Right cardiac atrium (tissue), 5 donors: ENCODE measurements at regions of chr16 and their contacts with region 1.

Region 1: DNA sequence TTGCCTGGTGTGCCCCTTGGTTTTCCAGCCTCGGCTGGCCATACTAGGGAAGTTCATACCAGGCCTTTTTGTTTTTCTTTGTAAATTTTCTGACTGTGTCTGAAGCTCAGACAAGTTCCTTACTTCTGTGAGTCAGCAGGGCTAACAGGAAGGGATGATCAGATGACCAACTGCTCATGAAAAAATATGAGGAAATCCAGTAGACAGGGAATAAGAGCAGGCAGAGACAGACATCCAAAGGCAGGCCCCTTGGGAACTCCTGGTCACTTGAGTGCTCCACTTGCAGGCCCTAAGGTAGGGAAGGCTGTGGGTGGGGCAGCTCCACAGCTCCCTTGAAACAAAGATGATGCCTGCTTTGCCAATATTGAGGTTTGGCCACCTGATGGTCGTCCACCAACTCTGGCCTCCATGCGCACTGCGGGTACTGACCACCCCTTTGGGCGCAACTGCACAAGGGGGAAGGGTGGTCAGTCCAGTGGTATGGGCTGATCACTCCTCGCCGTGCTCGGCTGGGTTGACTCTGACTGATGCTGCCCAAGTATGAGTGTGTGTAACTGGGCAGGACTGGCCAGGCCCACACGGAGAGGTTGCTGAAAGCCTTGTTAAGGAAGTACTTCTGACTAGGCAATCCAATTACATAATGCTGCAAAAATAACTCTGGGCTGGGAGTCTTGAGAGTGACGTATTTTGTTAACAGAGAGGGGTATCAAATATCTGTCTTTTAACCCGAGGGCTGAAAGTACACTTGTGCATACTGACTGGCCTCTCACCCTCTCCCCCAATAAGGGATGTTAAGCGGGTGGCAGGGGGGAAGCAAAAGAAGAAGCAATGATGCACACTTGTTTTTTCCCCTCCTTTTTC is 20.8 kb upstream of the ZFHX3 start:
- DNase-seq: peak; percentile 78 to 89 (median 84)
- ATAC-seq: peak; percentile 74 to 75
- H3K4me3 ChIP-seq: no peak overlapping the region
- H3K27ac ChIP-seq: peak overlapping the region; percentile 22
- H3K4me1 ChIP-seq: peaks cover 5% of the 10 kb centered on the region
- H3K27me3 ChIP-seq: no peaks in the 10 kb centered on the region

Region 2: DNA sequence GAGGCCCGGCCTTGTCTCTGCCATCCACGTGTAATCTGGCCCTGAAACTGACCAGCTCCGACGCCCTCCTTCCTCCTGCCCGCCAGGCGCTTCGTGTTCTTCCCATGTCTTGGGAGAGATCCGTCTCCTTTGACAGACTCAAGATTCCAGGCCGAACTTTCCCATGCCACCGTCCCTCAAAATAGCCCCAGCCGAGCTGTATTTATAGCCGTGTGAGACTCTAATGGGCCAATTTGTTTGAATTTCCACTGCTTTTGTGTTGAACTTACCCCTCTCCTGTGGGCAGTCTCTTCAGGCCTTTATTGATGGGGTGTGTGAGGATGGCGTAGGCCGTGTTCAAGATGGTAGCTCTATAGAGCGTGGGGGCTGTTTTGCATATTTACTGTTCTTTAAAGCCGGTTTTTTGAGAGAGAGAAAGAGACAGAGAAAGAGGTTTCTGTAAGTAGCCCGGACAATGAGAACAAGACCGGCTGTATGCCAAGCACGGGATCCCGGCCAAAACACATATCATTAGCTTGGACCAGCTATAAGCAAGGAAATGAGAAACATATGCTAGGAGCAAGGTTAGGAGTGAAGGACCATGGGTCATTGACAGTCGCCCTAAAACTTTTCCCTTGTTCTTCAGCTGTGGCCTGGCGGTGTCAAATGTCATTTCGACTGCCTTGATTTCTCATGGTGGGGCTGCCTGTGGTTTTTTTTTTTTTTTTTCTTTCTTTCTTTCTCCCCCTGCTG is 103.6 kb after region 1 on chr16:
- intact Hi-C with region 1: loop called in 1 of 4 experiments (anchors 10 kb)
- DNase-seq: peak; percentile 78 to 92 (median 88)
- ATAC-seq: peak; percentile 72 to 78
- H3K4me3 ChIP-seq: no peak overlapping the region
- H3K27ac ChIP-seq: peak overlapping the region; percentile 33
- H3K4me1 ChIP-seq: no peaks in the 10 kb centered on the region
- H3K27me3 ChIP-seq: no peaks in the 10 kb centered on the region

Region 3: DNA sequence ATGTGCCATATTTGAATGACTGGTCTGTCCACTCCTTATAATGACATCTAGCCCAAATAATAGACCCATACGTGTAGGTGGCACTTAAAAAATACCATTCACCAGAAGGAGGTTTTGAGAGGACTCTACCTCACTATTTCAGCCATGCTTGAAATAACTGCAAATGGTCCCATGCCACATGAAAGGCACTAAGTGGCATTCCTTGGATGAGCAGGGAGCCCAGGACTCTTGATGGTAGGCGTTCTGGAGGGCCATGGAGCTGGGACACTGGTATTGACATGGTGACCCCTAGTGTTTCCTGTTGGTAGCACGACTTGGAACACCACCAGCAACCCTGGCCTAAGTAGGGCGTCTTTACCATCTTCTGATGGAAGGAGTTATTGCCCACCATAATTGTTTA is 127.9 kb after region 1 on chr16:
- intact Hi-C with region 1: loop called in 1 of 4 experiments (anchors 10 kb)
- DNase-seq: peak; percentile 70 to 88 (median 71)
- ATAC-seq: peak; percentile 87 to 89
- H3K4me3 ChIP-seq: no peak overlapping the region
- H3K27ac ChIP-seq: no peak overlapping the region
- H3K4me1 ChIP-seq: no peaks in the 10 kb centered on the region
- H3K27me3 ChIP-seq: no peaks in the 10 kb centered on the region